CD4-positive, alpha-beta memory T cell (primary cell): ENCODE measurements at regions of chr2 and their contacts with region 1.

Region 1: GRCh38 chr2:30711646-30712085 is 95.6 kb downstream of the CAPN13 start:
- DNase-seq: peak; percentile 84 to 90 (median 85)
- H3K4me3 ChIP-seq: no peak overlapping the region
- H3K4me3 Mint-ChIP-seq: no peak overlapping the region
- H3K27ac ChIP-seq: no peak overlapping the region
- H3K27ac Mint-ChIP-seq: no peak overlapping the region
- H3K4me1 ChIP-seq: no peaks in the 10 kb centered on the region
- H3K4me1 Mint-ChIP-seq: peaks cover 0 to 9% (median 3%) of the 10 kb centered on the region in 4 donors
- H3K27me3 ChIP-seq: no peaks in the 10 kb centered on the region
- H3K27me3 Mint-ChIP-seq: peaks cover 0 to 3% of the 10 kb centered on the region in 2 donors

Region 2: DNA sequence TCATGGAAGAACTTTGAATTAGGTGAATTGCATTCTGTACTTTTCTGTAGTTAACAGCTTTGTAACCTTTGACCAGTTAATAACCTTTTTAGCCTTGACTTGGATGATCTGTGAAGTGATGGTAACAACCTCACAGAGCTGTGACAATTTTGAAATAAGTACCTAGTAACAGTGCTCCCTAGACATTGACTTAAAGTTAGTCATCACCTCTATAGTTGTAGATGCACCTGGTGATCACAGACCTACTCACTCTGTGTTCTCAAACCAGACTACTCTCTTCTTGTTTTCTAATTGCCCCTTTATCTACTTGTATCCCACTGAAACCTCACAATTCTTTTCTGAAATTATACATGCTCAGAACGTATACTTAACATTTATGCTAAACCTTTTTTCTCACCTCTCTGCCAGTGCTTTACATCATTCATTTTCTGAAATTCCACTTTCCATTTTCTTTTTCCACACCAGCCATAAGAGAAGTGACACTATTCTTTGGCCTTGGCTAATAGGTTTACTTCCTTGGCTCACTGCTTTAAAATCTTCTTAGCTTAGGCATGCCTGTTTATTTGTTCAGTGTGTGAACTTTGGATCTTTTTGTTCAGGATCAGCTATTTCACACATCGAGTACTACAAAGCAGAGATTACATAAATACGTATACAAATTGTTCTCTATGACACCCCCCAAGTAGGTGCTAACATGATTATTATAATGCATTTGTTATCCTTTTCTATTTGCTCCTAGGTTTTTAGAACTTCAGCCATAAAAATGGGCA is 555.6 kb before region 1 on chr2:
- CTCF ChIA-PET with region 1: interaction called, 95 read pairs
- POLR2A ChIA-PET with region 1: no interaction called
- intact Hi-C with region 1: no loop called
- DNase-seq: no peak
- H3K4me3 ChIP-seq: no peak overlapping the region
- H3K4me3 Mint-ChIP-seq: peak overlapping the region in 2 of 8 donors; percentile 5 to 22
- H3K27ac ChIP-seq: no peak overlapping the region
- H3K27ac Mint-ChIP-seq: peak overlapping the region in 5 of 7 donors; percentile 20 to 87 (median 81)
- H3K4me1 ChIP-seq: peaks cover 28% of the 10 kb centered on the region
- H3K4me1 Mint-ChIP-seq: peaks cover 21 to 79% (median 42%) of the 10 kb centered on the region in 4 donors
- H3K27me3 ChIP-seq: no peaks in the 10 kb centered on the region
- H3K27me3 Mint-ChIP-seq: no peaks in the 10 kb centered on the region

Region 3: DNA sequence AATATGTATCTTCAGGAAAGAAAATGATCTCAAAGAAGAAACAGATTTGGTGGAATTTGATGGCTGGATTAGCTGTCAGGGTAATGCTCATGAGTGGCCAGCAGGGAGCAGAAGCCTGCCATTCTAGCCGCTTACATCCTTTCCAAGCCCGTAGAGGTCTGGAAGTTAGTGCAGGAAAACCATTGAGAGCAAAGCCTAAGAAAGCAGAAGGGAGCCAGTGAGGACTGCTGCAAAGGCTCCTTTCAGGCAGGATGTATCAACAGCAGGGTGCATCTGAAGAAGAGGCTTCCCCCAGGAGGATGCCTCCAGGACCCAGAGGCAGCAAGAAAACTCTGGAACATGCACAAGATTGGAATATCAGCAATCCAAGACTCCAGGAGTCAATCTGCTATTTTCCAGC is 503.2 kb before region 1 on chr2:
- CTCF ChIA-PET with region 1: interaction called, 394 read pairs
- POLR2A ChIA-PET with region 1: interaction called, 10 read pairs
- intact Hi-C with region 1: loop called (anchors 1 kb)
- DNase-seq: peak in 3 of 5 donors; percentile 35 to 48 (median 43)
- H3K4me3 ChIP-seq: no peak overlapping the region
- H3K4me3 Mint-ChIP-seq: peak overlapping the region in 6 of 8 donors; percentile 8 to 77 (median 54)
- H3K27ac ChIP-seq: no peak overlapping the region
- H3K27ac Mint-ChIP-seq: peak overlapping the region in 6 of 7 donors; percentile 20 to 88 (median 58)
- H3K4me1 ChIP-seq: peaks cover 23% of the 10 kb centered on the region
- H3K4me1 Mint-ChIP-seq: peaks cover 13 to 20% (median 16%) of the 10 kb centered on the region in 4 donors
- H3K27me3 ChIP-seq: no peaks in the 10 kb centered on the region
- H3K27me3 Mint-ChIP-seq: no peaks in the 10 kb centered on the region

Region 4: DNA sequence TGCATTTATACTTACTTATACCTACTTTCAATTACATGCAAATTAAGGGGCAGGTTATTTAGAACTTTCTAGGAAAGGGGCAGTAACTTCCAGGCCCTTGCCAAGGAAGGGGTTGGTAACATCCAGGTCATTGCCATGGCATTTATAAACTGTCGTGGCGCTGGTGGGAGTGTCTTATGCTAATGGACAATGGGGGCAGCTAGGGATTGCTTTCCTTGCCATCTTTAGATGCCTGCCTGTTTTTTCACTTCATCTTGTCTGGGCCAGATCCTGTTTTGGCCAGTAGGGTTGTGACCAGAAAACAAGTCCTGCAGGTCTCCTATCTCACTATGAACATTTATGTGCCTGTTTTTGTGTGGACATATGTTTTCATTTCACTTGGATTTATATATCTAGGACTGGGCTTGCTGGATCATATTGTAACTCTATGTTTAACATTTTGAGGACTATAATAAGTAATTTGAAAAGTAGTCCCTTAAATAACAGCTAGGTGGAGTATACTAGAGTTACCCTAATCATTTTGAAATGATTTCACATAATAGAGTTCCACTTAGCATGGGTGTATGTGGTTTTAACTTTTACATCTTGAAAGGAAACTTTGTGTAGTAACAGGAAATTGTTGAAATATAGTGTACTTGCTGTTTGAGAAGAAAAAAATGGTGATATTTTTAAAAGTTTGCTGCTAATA is 208.5 kb before region 1 on chr2:
- CTCF ChIA-PET with region 1: interaction called, 5 read pairs
- POLR2A ChIA-PET with region 1: no interaction called
- intact Hi-C with region 1: loop called (anchors 10 kb)
- DNase-seq: peak in 4 of 5 donors; percentile 32 to 53 (median 44)
- H3K4me3 ChIP-seq: no peak overlapping the region
- H3K4me3 Mint-ChIP-seq: peak overlapping the region in 6 of 8 donors; percentile 53 to 72 (median 62)
- H3K27ac ChIP-seq: no peak overlapping the region
- H3K27ac Mint-ChIP-seq: peak overlapping the region; percentile 58 to 90 (median 82)
- H3K4me1 ChIP-seq: peaks cover 39% of the 10 kb centered on the region
- H3K4me1 Mint-ChIP-seq: peaks cover 33 to 40% (median 35%) of the 10 kb centered on the region in 4 donors
- H3K27me3 ChIP-seq: no peaks in the 10 kb centered on the region
- H3K27me3 Mint-ChIP-seq: no peaks in the 10 kb centered on the region

Region 5: DNA sequence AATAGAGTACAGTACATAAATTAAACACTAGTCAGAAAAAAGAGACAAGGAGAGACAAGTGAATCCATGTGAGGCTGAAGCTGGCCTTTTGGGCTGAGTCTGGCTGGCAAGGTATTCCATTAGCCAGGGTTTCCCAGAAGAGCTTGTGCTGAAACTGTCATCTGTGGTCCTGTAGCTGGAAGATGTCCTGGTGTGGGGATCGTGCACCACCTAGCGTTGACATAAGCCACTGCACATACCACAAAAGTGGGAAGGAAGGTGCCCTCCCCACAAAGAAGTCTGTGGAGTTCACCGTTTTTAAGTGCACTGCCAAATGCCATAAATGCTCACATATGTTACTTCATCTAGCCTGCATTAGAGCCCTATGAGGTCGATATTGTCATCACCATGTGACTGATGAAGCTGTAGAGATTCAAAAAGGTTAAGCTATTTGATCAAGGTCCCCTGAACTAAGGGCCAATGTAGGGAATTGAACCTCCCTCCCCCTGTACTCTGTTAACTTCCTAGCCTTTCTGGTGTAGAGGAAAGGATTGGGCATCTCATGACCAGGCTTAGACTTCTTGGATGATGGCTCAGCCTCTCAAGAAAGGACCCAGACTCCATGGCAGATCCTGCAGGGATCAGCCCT is 458.5 kb after region 1 on chr2:
- CTCF ChIA-PET with region 1: interaction called, 80 read pairs
- POLR2A ChIA-PET with region 1: no interaction called
- intact Hi-C with region 1: no loop called
- DNase-seq: peak in 4 of 5 donors; percentile 27 to 37 (median 30)
- H3K4me3 ChIP-seq: no peak overlapping the region
- H3K4me3 Mint-ChIP-seq: no peak overlapping the region
- H3K27ac ChIP-seq: no peak overlapping the region
- H3K27ac Mint-ChIP-seq: no peak overlapping the region
- H3K4me1 ChIP-seq: no peaks in the 10 kb centered on the region
- H3K4me1 Mint-ChIP-seq: peaks cover 0 to under 1% (median 0%) of the 10 kb centered on the region in 4 donors
- H3K27me3 ChIP-seq: no peaks in the 10 kb centered on the region
- H3K27me3 Mint-ChIP-seq: no peaks in the 10 kb centered on the region

Region 6: DNA sequence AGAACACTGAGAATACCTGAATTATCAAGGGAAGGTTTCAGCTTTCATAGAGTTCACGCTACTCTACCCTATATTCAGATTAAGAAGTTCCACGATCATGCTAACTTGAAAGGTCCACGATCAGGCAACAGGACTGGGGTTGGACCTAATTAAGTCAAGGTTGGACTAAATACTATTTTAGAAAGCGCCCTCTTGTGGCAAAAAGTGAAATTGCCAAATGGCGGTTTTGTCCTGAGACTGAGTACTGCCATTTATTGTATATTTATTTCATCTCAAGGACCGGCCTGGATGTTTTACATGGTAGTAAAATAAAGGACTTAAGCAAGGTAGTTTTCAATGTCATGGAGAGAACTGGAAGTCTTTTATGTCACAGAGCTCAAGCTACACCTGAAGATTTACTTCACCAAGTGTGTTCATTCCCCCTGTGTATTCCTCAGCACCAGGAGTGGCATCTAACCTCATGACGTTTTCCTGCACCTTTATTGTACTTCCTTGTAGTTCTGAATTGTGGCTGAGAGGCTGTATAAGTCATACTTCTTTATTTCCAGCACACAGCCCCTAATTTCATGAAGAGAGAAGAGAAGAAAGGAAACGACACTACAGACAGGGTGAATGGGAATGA is 812.3 kb after region 1 on chr2:
- CTCF ChIA-PET with region 1: interaction called, 95 read pairs
- POLR2A ChIA-PET with region 1: interaction called, 3 read pairs
- intact Hi-C with region 1: no loop called
- DNase-seq: peak in 4 of 5 donors; percentile 26 to 46 (median 42)
- H3K4me3 ChIP-seq: no peak overlapping the region
- H3K4me3 Mint-ChIP-seq: no peak overlapping the region
- H3K27ac ChIP-seq: no peak overlapping the region
- H3K27ac Mint-ChIP-seq: no peak overlapping the region
- H3K4me1 ChIP-seq: no peaks in the 10 kb centered on the region
- H3K4me1 Mint-ChIP-seq: no peaks in the 10 kb centered on the region
- H3K27me3 ChIP-seq: no peaks in the 10 kb centered on the region
- H3K27me3 Mint-ChIP-seq: peaks cover 7 to 18% of the 10 kb centered on the region in 2 donors